ENCODE measurements at regions of chr5 and their contacts with region 1.

Region 1: DNA sequence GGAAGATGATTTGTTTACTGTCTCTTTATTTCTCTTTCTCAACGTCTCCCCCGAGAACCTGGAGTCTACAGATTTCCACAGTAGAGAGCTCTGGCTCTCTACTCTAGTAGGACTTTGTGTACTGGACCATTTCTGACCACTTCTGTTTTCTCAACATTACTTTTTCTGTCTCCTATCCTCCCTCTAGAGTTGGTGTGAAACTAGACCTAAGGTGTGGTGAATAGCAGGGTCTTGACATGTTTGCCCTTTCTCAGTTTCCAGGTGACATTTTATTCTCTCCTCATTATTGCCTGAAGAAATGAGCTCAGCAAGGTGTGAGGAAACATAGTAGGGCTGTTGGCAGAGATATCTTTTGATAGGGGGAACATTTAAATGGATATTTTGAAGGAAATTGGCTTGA is 62.1 kb upstream of the IL6ST start:
- DNase-seq: no peak
- ATAC-seq: no peak
- H3K4me3 ChIP-seq: peak overlapping the region; percentile 21
- H3K4me3 Mint-ChIP-seq: peak overlapping the region in 8 of 10 donors; percentile 55 to 83 (median 68)
- H3K27ac ChIP-seq: peak overlapping the region; percentile 60
- H3K27ac Mint-ChIP-seq: peak overlapping the region; percentile 44 to 99 (median 90)
- H3K4me1 ChIP-seq: peaks cover 8 to 96% of the 10 kb centered on the region in 2 donors
- H3K4me1 Mint-ChIP-seq: peaks cover 52 to 94% (median 76%) of the 10 kb centered on the region in 7 donors
- H3K27me3 ChIP-seq: no peaks in the 10 kb centered on the region
- H3K27me3 Mint-ChIP-seq: peaks cover 0 to 6% (median 0%) of the 10 kb centered on the region in 5 donors

Region 2: GRCh38 chr5:55880453-55880852 is 176.4 kb before region 1 on chr5:
- CTCF ChIA-PET with region 1: no interaction called
- POLR2A ChIA-PET with region 1: no interaction called
- intact Hi-C with region 1: no loop called
- DNase-seq: no peak
- ATAC-seq: no peak
- H3K4me3 ChIP-seq: no peak overlapping the region
- H3K4me3 Mint-ChIP-seq: no peak overlapping the region
- H3K27ac ChIP-seq: no peak overlapping the region
- H3K27ac Mint-ChIP-seq: no peak overlapping the region
- H3K4me1 ChIP-seq: no peaks in the 10 kb centered on the region
- H3K4me1 Mint-ChIP-seq: peaks cover 0 to 5% (median 0%) of the 10 kb centered on the region in 7 donors
- H3K27me3 ChIP-seq: no peaks in the 10 kb centered on the region
- H3K27me3 Mint-ChIP-seq: peaks cover 0 to 5% (median 0%) of the 10 kb centered on the region in 5 donors

Region 3: GRCh38 chr5:56012281-56012963 is 44.5 kb before region 1 on chr5:
- CTCF ChIA-PET with region 1: interaction called, 5 read pairs
- POLR2A ChIA-PET with region 1: interaction called, 26 read pairs
- intact Hi-C with region 1: loop called in 1 of 2 experiments (anchors 1 kb)
- DNase-seq: peak in 7 of 9 donors; percentile 51 to 84 (median 75)
- ATAC-seq: peak; percentile 91
- H3K4me3 ChIP-seq: no peak overlapping the region
- H3K4me3 Mint-ChIP-seq: peak overlapping the region; percentile 13 to 84 (median 66)
- H3K27ac ChIP-seq: peak overlapping the region; percentile 57
- H3K27ac Mint-ChIP-seq: peak overlapping the region; percentile 71 to 96 (median 89)
- H3K4me1 ChIP-seq: peaks cover 26% of the 10 kb centered on the region in 2 donors
- H3K4me1 Mint-ChIP-seq: peaks cover 26 to 52% (median 49%) of the 10 kb centered on the region in 7 donors
- H3K27me3 ChIP-seq: no peaks in the 10 kb centered on the region
- H3K27me3 Mint-ChIP-seq: no peaks in the 10 kb centered on the region

Region 4: GRCh38 chr5:56095579-56096102 is 38.8 kb after region 1 on chr5:
- CTCF ChIA-PET with region 1: interaction called, 3 read pairs
- POLR2A ChIA-PET with region 1: interaction called, 58 read pairs
- intact Hi-C with region 1: loop called in 1 of 2 experiments (anchors 5 kb)
- DNase-seq: no peak
- ATAC-seq: no peak
- H3K4me3 ChIP-seq: no peak overlapping the region
- H3K4me3 Mint-ChIP-seq: peak overlapping the region in 9 of 10 donors; percentile 32 to 77 (median 56)
- H3K27ac ChIP-seq: peak overlapping the region; percentile 54
- H3K27ac Mint-ChIP-seq: peak overlapping the region; percentile 66 to 100 (median 91)
- H3K4me1 ChIP-seq: peaks cover 0 to 94% of the 10 kb centered on the region in 2 donors
- H3K4me1 Mint-ChIP-seq: peaks cover 56 to 97% (median 86%) of the 10 kb centered on the region in 7 donors
- H3K27me3 ChIP-seq: no peaks in the 10 kb centered on the region
- H3K27me3 Mint-ChIP-seq: no peaks in the 10 kb centered on the region

Region 5: GRCh38 chr5:56123531-56124243 is 66.8 kb after region 1 on chr5:
- CTCF ChIA-PET with region 1: interaction called, 4 read pairs
- POLR2A ChIA-PET with region 1: interaction called, 13 read pairs
- intact Hi-C with region 1: no loop called
- DNase-seq: no peak
- ATAC-seq: peak; percentile 29
- H3K4me3 ChIP-seq: no peak overlapping the region
- H3K4me3 Mint-ChIP-seq: peak overlapping the region in 3 of 10 donors; percentile 3 to 38 (median 29)
- H3K27ac ChIP-seq: no peak overlapping the region
- H3K27ac Mint-ChIP-seq: peak overlapping the region in 8 of 9 donors; percentile 32 to 89 (median 74)
- H3K4me1 ChIP-seq: peaks cover 0 to 42% of the 10 kb centered on the region in 2 donors
- H3K4me1 Mint-ChIP-seq: peaks cover 21 to 59% (median 45%) of the 10 kb centered on the region in 7 donors
- H3K27me3 ChIP-seq: no peaks in the 10 kb centered on the region
- H3K27me3 Mint-ChIP-seq: no peaks in the 10 kb centered on the region

Region 6: DNA sequence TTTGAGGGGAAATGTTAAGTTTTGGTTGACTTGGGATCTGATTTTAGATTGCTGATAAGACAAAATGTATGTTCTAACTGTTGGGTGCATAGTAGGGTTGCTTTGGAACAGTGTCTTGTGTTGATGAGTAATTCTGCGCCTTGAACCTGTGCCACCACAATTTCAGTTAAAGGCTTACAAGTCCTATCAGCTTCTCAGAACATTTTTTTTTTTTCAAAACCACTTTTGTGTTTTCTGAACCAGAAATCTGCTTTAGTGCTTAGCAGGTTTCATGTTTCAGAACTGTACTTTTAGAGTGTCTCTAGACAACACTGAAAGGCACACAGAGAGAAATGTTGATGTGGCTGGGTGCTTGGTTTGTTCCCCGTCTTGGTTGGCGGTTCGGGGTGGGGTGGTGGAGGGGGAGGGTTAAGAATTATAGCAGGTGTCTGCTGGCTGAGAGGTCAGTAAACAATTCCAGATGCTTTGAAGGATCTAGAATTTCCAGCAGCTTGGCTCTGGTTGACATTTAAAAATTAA is 91.6 kb after region 1 on chr5:
- CTCF ChIA-PET with region 1: no interaction called
- POLR2A ChIA-PET with region 1: interaction called, 12 read pairs
- intact Hi-C with region 1: loop called in 1 of 2 experiments (anchors 2 kb)
- DNase-seq: peak in 8 of 9 donors; percentile 52 to 84 (median 70)
- ATAC-seq: peak; percentile 87
- H3K4me3 ChIP-seq: peak overlapping the region; percentile 18
- H3K4me3 Mint-ChIP-seq: peak overlapping the region; percentile 45 to 74 (median 62)
- H3K27ac ChIP-seq: peak overlapping the region; percentile 61
- H3K27ac Mint-ChIP-seq: peak overlapping the region; percentile 87 to 97 (median 94)
- H3K4me1 ChIP-seq: peaks cover 0 to 76% of the 10 kb centered on the region in 2 donors
- H3K4me1 Mint-ChIP-seq: peaks cover 39 to 76% (median 70%) of the 10 kb centered on the region in 7 donors
- H3K27me3 ChIP-seq: no peaks in the 10 kb centered on the region
- H3K27me3 Mint-ChIP-seq: peaks cover 0 to 2% (median 0%) of the 10 kb centered on the region in 5 donors

Region 7: GRCh38 chr5:57349214-57349613 is 1292.3 kb after region 1 on chr5:
- CTCF ChIA-PET with region 1: no interaction called
- POLR2A ChIA-PET with region 1: no interaction called
- intact Hi-C with region 1: no loop called
- DNase-seq: no peak
- ATAC-seq: no peak
- H3K4me3 ChIP-seq: no peak overlapping the region
- H3K4me3 Mint-ChIP-seq: no peak overlapping the region
- H3K27ac ChIP-seq: no peak overlapping the region
- H3K27ac Mint-ChIP-seq: no peak overlapping the region
- H3K4me1 ChIP-seq: no peaks in the 10 kb centered on the region
- H3K4me1 Mint-ChIP-seq: no peaks in the 10 kb centered on the region
- H3K27me3 ChIP-seq: no peaks in the 10 kb centered on the region
- H3K27me3 Mint-ChIP-seq: peaks cover 0 to 3% (median 0%) of the 10 kb centered on the region in 5 donors

Measured in naive thymus-derived CD4-positive, alpha-beta T cell (primary cell).